Caco-2 (cell line): ENCODE measurements at regions of chr3 and their contacts with region 1.

Region 1: DNA sequence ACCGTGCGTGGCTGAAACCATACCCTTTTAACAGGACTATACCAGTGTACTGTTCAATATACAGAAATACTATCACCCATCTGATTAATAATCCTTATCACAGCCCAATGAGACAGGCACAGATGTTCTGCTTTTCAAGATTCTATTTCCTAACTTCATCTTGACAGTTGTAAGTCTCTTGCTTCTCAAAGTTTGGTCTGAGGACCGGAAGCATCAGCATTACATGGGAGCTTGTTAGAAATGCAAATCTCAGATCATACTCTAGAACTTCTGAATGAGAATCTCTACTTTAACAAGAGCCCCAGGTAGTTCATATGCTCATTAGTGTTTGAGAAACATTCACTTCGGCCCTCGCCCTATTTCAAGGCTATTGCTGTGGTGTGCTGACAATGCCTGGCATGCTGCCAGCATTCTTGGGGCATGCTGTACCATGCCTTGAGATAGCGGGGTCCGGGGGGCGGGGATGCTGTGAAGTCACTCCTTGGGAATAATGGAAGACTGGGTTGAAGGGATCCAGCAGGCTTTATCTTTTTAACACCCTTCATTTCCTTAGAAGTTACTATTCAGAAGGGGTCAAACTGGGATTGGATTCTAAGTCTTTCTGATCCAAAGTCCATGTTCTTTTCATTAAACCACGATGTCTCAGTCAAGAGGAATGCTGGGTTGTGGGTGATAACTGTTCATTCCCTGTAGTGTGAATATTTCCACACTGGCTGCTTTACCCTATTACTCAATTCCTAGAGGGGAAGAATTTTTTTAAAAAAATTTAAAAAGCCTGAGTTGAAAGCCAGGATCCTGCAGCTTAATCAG is 194.7 kb downstream of the LPP start:
- DNase-seq: peak; percentile 58 to 83
- H3K4me3 ChIP-seq: no peak overlapping the region
- H3K4me3 Mint-ChIP-seq: peak overlapping the region; percentile 34
- H3K27ac Mint-ChIP-seq: peak overlapping the region; percentile 75
- H3K4me1 ChIP-seq: peaks cover 38% of the 10 kb centered on the region
- H3K4me1 Mint-ChIP-seq: peaks cover 34% of the 10 kb centered on the region
- H3K27me3 ChIP-seq: no peaks in the 10 kb centered on the region
- H3K27me3 Mint-ChIP-seq: no peaks in the 10 kb centered on the region
- CTCF ChIP-seq: no peak

Region 2: DNA sequence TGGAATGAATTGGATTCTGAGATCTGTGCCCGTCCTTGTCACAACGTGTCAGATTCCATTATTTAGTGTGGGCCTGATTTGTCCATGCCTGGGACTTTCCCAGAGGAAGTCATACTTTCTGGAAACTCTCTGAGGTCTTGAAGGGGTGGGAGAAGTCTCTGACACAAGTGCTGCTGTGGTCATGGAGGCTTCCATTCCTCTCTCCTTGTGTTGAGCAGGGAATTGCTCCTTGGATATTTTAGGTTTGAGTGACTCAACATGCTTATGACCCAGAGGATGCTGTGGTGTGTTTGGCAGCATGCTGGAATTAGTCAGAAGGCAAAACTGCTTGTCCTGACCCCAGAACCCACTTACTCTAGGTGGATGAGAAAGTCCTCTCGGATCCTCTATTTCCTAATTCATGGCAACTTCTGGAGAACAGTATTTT is 62.5 kb before region 1 on chr3:
- CTCF ChIA-PET with region 1: no interaction called
- POLR2A ChIA-PET with region 1: no interaction called
- intact Hi-C with region 1: loop called (anchors 2 kb)
- DNase-seq: no peak
- H3K4me3 ChIP-seq: no peak overlapping the region
- H3K4me3 Mint-ChIP-seq: no peak overlapping the region
- H3K27ac Mint-ChIP-seq: no peak overlapping the region
- H3K4me1 ChIP-seq: peaks cover 38% of the 10 kb centered on the region
- H3K4me1 Mint-ChIP-seq: peaks cover 45% of the 10 kb centered on the region
- H3K27me3 ChIP-seq: no peaks in the 10 kb centered on the region
- H3K27me3 Mint-ChIP-seq: no peaks in the 10 kb centered on the region
- CTCF ChIP-seq: no peak